Psoas muscle (tissue), 8 donors: ENCODE measurements at regions of chr2 and their contacts with region 1.

Region 1: DNA sequence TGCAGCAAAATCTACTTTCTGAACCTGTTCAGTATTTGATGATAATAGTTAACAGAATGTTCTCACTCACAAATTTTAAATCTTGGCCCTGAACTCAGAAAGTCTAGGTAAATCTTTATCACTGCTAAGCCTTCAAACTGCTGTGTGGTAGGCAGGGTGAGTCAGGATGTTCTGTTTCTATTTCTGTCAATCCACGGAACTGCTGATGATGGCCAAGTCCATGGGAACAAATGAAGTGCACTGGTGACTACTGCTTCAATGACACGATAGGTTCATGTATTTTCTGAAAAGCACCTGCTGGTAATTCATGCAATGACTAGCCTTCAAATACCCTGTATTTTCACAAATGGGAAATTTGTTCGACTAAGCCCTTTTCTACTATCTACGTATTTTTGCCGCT is 14.2 kb downstream of the NIFK start:
- DNase-seq: no peak
- ATAC-seq: peak; percentile 85 to 93 (median 92)
- H3K4me3 ChIP-seq: no peak overlapping the region
- H3K27ac ChIP-seq: peak overlapping the region; percentile 75
- H3K4me1 ChIP-seq: peaks cover 19% of the 10 kb centered on the region
- H3K27me3 ChIP-seq: no peaks in the 10 kb centered on the region
- CTCF ChIP-seq: no peak

Region 2: GRCh38 chr2:121400201-121400600 is 322.3 kb before region 1 on chr2:
- intact Hi-C with region 1: loop called (anchors 2 to 5 kb)
- DNase-seq: no peak
- ATAC-seq: peak in 1 of 4 donors; percentile 26
- H3K4me3 ChIP-seq: no peak overlapping the region
- H3K27ac ChIP-seq: no peak overlapping the region
- H3K4me1 ChIP-seq: no peaks in the 10 kb centered on the region
- H3K27me3 ChIP-seq: no peaks in the 10 kb centered on the region
- CTCF ChIP-seq: no peak

Region 3: GRCh38 chr2:121596221-121597080 is 126.0 kb before region 1 on chr2:
- intact Hi-C with region 1: loop called in 1 of 2 experiments (anchors 5 kb)
- DNase-seq: no peak
- ATAC-seq: peak; percentile 63 to 78 (median 66)
- H3K4me3 ChIP-seq: peak overlapping the region; percentile 47
- H3K27ac ChIP-seq: peak overlapping the region; percentile 82
- H3K4me1 ChIP-seq: peaks cover 56% of the 10 kb centered on the region
- H3K27me3 ChIP-seq: no peaks in the 10 kb centered on the region
- CTCF ChIP-seq: peak; percentile 59